Activated CD4-positive, alpha-beta memory T cell treated with anti-CD3 and anti-CD28 coated beads for 36 hours (primary cell): ENCODE measurements at regions of chr9 and their contacts with region 1.

Region 1: GRCh38 chr9:96418074-96418809 is at the start of gene ZNF367:
- DNase-seq: peak; percentile 96
- H3K4me3 Mint-ChIP-seq: peak within 1 kb of the TSS; percentile 90
- H3K27ac Mint-ChIP-seq: peak within 1 kb of the TSS; percentile 93
- H3K4me1 Mint-ChIP-seq: peaks cover 37% of the 10 kb centered on the region
- H3K27me3 Mint-ChIP-seq: no peaks in the 10 kb centered on the region
- total RNA-seq, gene ZNF367: 29.0 to 30.1 TPM

Region 2: GRCh38 chr9:95875305-95876137 is 542.7 kb before region 1 on chr9 and contains the start of gene ERCC6L2:
- CTCF ChIA-PET with region 1: no interaction called
- POLR2A ChIA-PET with region 1: no interaction called
- intact Hi-C with region 1: loop called (anchors 2 kb)
- DNase-seq: peak; percentile 97
- H3K4me3 Mint-ChIP-seq: no peak within 1 kb of the TSS
- H3K27ac Mint-ChIP-seq: no peak within 1 kb of the TSS
- H3K4me1 Mint-ChIP-seq: peaks cover 28% of the 10 kb centered on the region
- H3K27me3 Mint-ChIP-seq: no peaks in the 10 kb centered on the region
- total RNA-seq, gene ERCC6L2: 23.1 to 25.1 TPM

Region 3: GRCh38 chr9:96383165-96383942 is 34.9 kb before region 1 on chr9 and contains the start of gene SLC35D2:
- CTCF ChIA-PET with region 1: interaction called, 4 read pairs
- POLR2A ChIA-PET with region 1: no interaction called
- intact Hi-C with region 1: loop called (anchors 2 kb)
- DNase-seq: peak; percentile 24
- H3K4me3 Mint-ChIP-seq: peak within 1 kb of the TSS; percentile 78
- H3K27ac Mint-ChIP-seq: peak within 1 kb of the TSS; percentile 82
- H3K4me1 Mint-ChIP-seq: peaks cover 32% of the 10 kb centered on the region
- H3K27me3 Mint-ChIP-seq: no peaks in the 10 kb centered on the region
- total RNA-seq, gene SLC35D2: 8.1 to 8.5 TPM

Region 4: GRCh38 chr9:96449845-96450612 is 31.8 kb after region 1 on chr9 and contains the start of gene HABP4:
- CTCF ChIA-PET with region 1: no interaction called
- POLR2A ChIA-PET with region 1: interaction called, 3 read pairs
- intact Hi-C with region 1: loop called (anchors 1 kb)
- DNase-seq: peak; percentile 97
- H3K4me3 Mint-ChIP-seq: peak within 1 kb of the TSS; percentile 89
- H3K27ac Mint-ChIP-seq: peak within 1 kb of the TSS; percentile 75
- H3K4me1 Mint-ChIP-seq: peaks cover 33% of the 10 kb centered on the region
- H3K27me3 Mint-ChIP-seq: peaks cover 8% of the 10 kb centered on the region
- total RNA-seq, gene HABP4: 17.4 to 19.0 TPM

Region 5: DNA sequence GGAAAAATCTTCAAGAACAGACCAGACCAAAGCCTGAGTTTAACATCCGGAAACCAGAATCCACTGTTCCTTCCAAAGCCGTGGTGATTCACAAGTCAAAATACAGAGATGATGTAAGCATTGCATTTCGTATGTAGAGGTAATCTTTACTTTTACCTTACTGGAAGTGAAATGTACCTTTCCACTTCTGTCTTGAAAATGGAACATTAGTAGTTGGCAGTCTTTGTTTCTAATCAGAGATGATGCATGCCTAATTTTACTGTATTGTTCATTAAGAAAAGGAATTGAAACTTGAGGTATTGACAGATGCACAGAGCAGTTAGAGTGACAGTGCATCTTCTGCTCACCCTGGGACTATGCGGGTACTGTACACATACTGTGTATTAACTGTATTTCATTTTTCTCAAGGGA is 66.3 kb after region 1 on chr9:
- CTCF ChIA-PET with region 1: no interaction called
- POLR2A ChIA-PET with region 1: no interaction called
- intact Hi-C with region 1: loop called (anchors 2 kb)
- DNase-seq: peak; percentile 35
- H3K4me3 Mint-ChIP-seq: no peak overlapping the region
- H3K27ac Mint-ChIP-seq: peak overlapping the region; percentile 73
- H3K4me1 Mint-ChIP-seq: peaks cover 41% of the 10 kb centered on the region
- H3K27me3 Mint-ChIP-seq: no peaks in the 10 kb centered on the region

Region 6: DNA sequence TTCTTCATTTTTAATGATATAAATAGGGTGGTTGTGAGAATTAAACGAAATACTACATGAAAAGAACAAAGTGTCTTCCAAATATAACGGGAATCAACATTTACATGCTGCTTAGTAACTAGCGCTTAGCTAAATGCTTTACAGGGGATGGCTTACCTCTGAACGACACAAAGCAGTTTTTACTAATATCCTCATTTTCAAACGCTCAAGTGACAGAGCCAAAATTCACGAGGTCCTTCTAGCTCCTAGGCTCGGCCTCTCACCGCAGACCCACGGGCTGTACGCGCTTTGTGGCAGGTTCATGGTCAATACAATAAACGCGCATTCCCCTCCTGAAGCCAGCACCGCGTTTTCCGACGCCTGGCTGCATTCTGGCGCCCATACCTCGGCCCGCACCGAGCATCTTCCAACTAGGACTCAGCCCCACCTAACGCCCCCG is 359.2 kb after region 1 on chr9:
- CTCF ChIA-PET with region 1: no interaction called
- POLR2A ChIA-PET with region 1: no interaction called
- intact Hi-C with region 1: loop called (anchors 10 kb)
- DNase-seq: no peak
- H3K4me3 Mint-ChIP-seq: peak overlapping the region; percentile 100
- H3K27ac Mint-ChIP-seq: peak overlapping the region; percentile 88
- H3K4me1 Mint-ChIP-seq: peaks cover 28% of the 10 kb centered on the region
- H3K27me3 Mint-ChIP-seq: no peaks in the 10 kb centered on the region